Dorsolateral prefrontal cortex (tissue), 120 donors: ENCODE measurements at regions of chr2 and their contacts with region 1.

Region 1: GRCh38 chr2:225495706-225496105 is 96.2 kb downstream of the NYAP2 start:
- DNase-seq: no peak
- H3K4me3 ChIP-seq: no peak overlapping the region
- H3K27ac ChIP-seq: no peak overlapping the region
- H3K27me3 ChIP-seq: no peaks in the 10 kb centered on the region
- CTCF ChIP-seq: no peak

Region 2: GRCh38 chr2:225254363-225254762 is 241.3 kb before region 1 on chr2:
- intact Hi-C with region 1: no loop called
- DNase-seq: no peak
- H3K4me3 ChIP-seq: no peak overlapping the region
- H3K27ac ChIP-seq: no peak overlapping the region
- H3K27me3 ChIP-seq: no peaks in the 10 kb centered on the region
- CTCF ChIP-seq: no peak

Region 3: DNA sequence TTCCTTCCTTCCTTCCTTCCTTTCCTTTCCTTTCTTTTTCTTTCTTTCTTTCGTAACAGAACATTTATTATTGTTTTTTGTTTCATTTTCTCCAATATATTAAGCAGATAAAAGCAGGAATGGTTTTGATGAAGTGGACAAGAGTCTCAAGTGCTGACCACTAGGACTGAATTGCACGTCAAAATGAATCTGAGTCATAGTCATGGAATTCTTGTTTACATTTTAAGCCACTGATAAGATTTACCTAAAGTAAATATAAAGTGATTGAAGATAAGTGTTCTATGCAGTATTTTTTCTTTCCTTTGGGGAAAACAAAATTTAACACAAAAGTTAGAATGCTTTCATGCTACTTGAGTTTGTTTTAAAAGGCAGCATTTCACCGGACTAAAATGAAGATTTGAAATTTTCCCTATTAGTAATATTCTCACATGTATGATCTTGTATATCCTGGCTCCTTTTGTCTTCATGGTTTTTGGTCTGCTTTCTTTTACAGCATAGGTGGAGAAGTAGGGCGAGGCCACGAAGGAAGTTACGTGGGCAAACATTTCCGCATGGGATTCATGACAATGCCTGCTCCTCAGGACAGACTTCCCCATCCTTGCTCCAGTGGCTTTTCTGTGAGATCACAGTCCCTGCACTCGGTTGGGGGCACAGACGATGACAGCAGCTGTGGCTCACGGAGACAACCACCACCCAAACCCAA is 17.3 kb after region 1 on chr2:
- intact Hi-C with region 1: no loop called
- DNase-seq: no peak
- H3K4me3 ChIP-seq: no peak overlapping the region
- H3K27ac ChIP-seq: no peak overlapping the region
- H3K27me3 ChIP-seq: peaks cover 0 to 3% (median 0%) of the 10 kb centered on the region in 45 donors
- CTCF ChIP-seq: no peak

Region 4: GRCh38 chr2:225558399-225559071 is 62.8 kb after region 1 on chr2:
- intact Hi-C with region 1: loop called in 1 of 2 experiments (anchors 2 kb)
- DNase-seq: no peak
- H3K4me3 ChIP-seq: no peak overlapping the region
- H3K27ac ChIP-seq: no peak overlapping the region
- H3K27me3 ChIP-seq: peaks cover 0 to 6% (median 0%) of the 10 kb centered on the region in 45 donors
- CTCF ChIP-seq: no peak